ENCODE measurements at regions of chr11 and their contacts with region 1.

Region 1: GRCh38 chr11:62880803-62881578 is at the start of gene SLC3A2:
- DNase-seq: peak; percentile 87
- ATAC-seq: peak; percentile 80
- H3K4me3 Mint-ChIP-seq: peak within 1 kb of the TSS; percentile 99
- H3K27ac Mint-ChIP-seq: peak within 1 kb of the TSS; percentile 100
- H3K4me1 Mint-ChIP-seq: peaks cover 49% of the 10 kb centered on the region
- H3K27me3 Mint-ChIP-seq: peaks cover 3% of the 10 kb centered on the region; the same call in 1 of the 2 replicates
- CTCF ChIP-seq: peak; percentile 22; the same call in 1 of the 2 replicates
- total RNA-seq, gene SLC3A2: 244 to 334 TPM (median 265 TPM) in 3 replicates

Region 2: GRCh38 chr11:62860835-62861563 is 20.0 kb before region 1 on chr11:
- CTCF ChIA-PET with region 1: interaction called, 14 read pairs
- POLR2A ChIA-PET with region 1: interaction called, 44 read pairs
- DNase-seq: no peak
- ATAC-seq: no peak
- H3K4me3 Mint-ChIP-seq: no peak overlapping the region; the same call in 1 of the 2 replicates
- H3K27ac Mint-ChIP-seq: peak overlapping the region; percentile 96
- H3K4me1 Mint-ChIP-seq: peaks cover 62% of the 10 kb centered on the region
- H3K27me3 Mint-ChIP-seq: no peaks in the 10 kb centered on the region
- CTCF ChIP-seq: no peak

Region 3: DNA sequence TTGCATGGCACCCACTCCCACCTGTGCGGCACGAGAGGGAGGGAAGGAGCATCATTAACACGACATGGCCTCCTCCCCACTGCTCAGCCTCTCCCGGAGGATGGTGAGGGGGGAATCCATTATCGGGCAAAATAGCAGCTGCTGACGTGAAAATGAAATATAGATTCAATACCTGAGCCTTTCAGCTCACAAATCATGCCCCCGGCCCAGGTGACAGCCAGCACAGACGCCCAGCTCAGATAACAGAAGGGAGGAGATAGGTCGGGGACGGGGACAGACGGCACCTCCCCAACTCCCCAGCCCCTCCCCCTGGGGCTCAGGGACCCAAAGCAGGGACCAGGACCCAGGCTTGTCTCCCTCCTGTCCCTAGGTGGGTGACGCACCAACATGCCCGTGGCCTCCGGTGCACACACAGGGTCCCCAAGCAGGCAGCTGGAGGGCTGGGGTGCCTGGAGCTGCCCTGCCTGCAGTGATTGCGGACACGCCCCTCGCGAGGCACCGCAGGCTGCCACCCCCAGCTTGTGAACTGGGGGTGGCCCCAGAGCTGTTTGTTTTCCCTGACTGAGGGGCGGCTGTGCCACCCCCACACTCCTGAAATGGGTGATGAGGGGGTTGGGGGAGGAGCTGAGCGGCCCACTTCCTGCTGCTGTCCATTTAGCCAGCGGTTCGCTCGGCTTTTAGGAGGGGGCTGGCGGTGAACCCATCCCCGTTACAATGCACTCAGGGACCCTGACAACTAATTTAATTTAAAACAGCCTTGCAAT is 1186.4 kb after region 1 on chr11:
- CTCF ChIA-PET with region 1: no interaction called
- POLR2A ChIA-PET with region 1: interaction called, 10 read pairs
- DNase-seq: no peak
- ATAC-seq: peak; percentile 16; the same call in 1 of the 2 replicates
- H3K4me3 Mint-ChIP-seq: no peak overlapping the region
- H3K27ac Mint-ChIP-seq: no peak overlapping the region
- H3K4me1 Mint-ChIP-seq: peaks cover 12% of the 10 kb centered on the region; the same call in 1 of the 2 replicates
- H3K27me3 Mint-ChIP-seq: peaks cover 83% of the 10 kb centered on the region
- CTCF ChIP-seq: no peak

Measured in WTC11 (cell line).